CD4-positive, alpha-beta T cell (primary cell): ENCODE measurements at regions of chr1 and their contacts with region 1.

Region 1: GRCh38 chr1:232923739-232924386 is 26.5 kb upstream of the NTPCR start:
- DNase-seq: peak; percentile 4 to 88 (median 21)
- ATAC-seq: peak; percentile 90
- H3K4me3 ChIP-seq: peak overlapping the region; percentile 17
- H3K4me3 Mint-ChIP-seq: peak overlapping the region; percentile 56
- H3K27ac ChIP-seq: peak overlapping the region; percentile 26 to 60
- H3K27ac Mint-ChIP-seq: peak overlapping the region; percentile 83
- H3K4me1 ChIP-seq: peaks cover 50% of the 10 kb centered on the region
- H3K4me1 Mint-ChIP-seq: peaks cover 64% of the 10 kb centered on the region
- H3K27me3 ChIP-seq: no peaks in the 10 kb centered on the region
- H3K27me3 Mint-ChIP-seq: no peaks in the 10 kb centered on the region
- CTCF ChIP-seq: no peak

Region 2: DNA sequence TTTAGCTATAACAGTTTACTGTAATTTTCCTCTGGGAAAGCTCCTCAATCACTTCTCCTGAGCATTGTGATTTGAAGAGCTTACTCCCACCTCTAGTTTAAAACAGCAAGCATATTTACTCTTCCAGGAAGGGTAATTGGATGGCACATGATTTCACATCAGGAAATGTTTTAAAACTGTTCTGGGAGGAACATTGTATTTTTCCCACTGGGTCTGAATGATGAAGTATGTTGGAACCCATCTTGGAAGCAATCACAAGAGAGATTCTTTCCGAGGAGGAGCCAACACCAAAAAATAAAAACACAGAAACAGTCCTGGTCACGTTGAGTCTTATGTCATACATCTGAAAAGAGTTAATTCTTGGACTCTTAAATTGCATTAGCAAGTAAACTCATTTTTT is 101.3 kb before region 1 on chr1:
- CTCF ChIA-PET with region 1: no interaction called
- POLR2A ChIA-PET with region 1: no interaction called
- intact Hi-C with region 1: no loop called
- DNase-seq: no peak
- ATAC-seq: no peak
- H3K4me3 ChIP-seq: no peak overlapping the region
- H3K4me3 Mint-ChIP-seq: no peak overlapping the region
- H3K27ac ChIP-seq: no peak overlapping the region
- H3K27ac Mint-ChIP-seq: no peak overlapping the region
- H3K4me1 ChIP-seq: no peaks in the 10 kb centered on the region
- H3K4me1 Mint-ChIP-seq: no peaks in the 10 kb centered on the region
- H3K27me3 ChIP-seq: no peaks in the 10 kb centered on the region
- H3K27me3 Mint-ChIP-seq: no peaks in the 10 kb centered on the region
- CTCF ChIP-seq: no peak

Region 3: GRCh38 chr1:232943679-232944252 is 19.9 kb after region 1 on chr1:
- CTCF ChIA-PET with region 1: no interaction called
- POLR2A ChIA-PET with region 1: interaction called, 11 read pairs
- intact Hi-C with region 1: loop called in 1 of 2 experiments (anchors 2 kb)
- DNase-seq: no peak
- ATAC-seq: no peak
- H3K4me3 ChIP-seq: no peak overlapping the region
- H3K4me3 Mint-ChIP-seq: peak overlapping the region; percentile 26
- H3K27ac ChIP-seq: no peak overlapping the region
- H3K27ac Mint-ChIP-seq: peak overlapping the region; percentile 60
- H3K4me1 ChIP-seq: peaks cover 14% of the 10 kb centered on the region
- H3K4me1 Mint-ChIP-seq: peaks cover 25% of the 10 kb centered on the region
- H3K27me3 ChIP-seq: no peaks in the 10 kb centered on the region
- H3K27me3 Mint-ChIP-seq: no peaks in the 10 kb centered on the region
- CTCF ChIP-seq: no peak

Region 4: DNA sequence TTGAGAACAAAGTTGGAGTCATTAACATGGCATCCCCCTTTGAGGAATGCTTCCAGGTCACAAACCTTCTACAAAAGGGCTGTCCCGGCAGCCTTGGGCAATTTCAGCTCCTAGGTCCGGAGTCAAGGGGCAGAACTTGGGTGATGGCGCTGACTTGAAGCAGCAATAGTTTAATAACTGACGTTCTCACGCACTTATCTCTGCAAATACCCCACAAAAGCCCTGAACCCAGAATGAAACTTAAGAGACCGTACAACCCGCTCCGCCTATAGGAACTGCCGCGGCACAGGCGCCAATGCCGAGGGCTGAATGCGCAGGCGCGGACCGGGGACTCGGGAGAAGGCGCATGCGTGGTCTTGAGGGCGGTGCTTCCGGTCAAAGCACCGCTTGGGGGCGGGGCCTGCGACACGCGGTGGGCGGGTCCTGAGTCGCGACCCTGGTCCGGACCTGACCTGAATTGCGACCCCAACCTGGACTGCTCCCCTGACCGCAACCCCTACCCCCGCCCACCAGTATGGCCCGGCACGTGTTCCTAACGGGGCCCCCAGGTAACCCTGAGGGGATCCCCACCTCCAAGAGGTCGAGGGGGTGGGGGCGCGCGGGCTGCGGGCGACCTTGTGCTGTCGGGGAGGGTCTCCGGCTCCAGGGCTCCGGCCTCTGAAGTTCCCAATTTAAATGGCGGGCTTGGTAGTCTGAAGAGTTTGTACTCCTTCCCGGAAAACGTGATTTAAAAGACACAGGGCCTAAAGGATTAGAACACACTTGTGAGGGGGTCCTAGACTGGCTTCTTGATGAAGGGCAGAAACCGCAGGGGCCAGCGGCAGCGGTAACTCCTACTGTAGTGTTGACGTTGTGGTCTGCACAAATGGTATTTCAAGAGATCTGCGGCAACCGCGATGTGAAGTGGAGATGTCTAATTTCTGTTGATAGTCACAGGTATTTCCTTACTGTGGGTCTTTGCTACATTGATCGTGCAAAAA is 26.6 kb after region 1 on chr1 and contains the start of gene NTPCR:
- CTCF ChIA-PET with region 1: no interaction called
- POLR2A ChIA-PET with region 1: interaction called, 7 read pairs
- intact Hi-C with region 1: loop called (anchors 1 to 2 kb)
- DNase-seq: peak; percentile 86 to 98 (median 94)
- ATAC-seq: peak; percentile 83
- H3K4me3 ChIP-seq: peak within 1 kb of the TSS; percentile 85
- H3K4me3 Mint-ChIP-seq: peak within 1 kb of the TSS; percentile 96
- H3K27ac ChIP-seq: peak within 1 kb of the TSS; percentile 56 to 66
- H3K27ac Mint-ChIP-seq: peak within 1 kb of the TSS; percentile 83
- H3K4me1 ChIP-seq: peaks cover 27% of the 10 kb centered on the region
- H3K4me1 Mint-ChIP-seq: peaks cover 54% of the 10 kb centered on the region
- H3K27me3 ChIP-seq: no peaks in the 10 kb centered on the region
- H3K27me3 Mint-ChIP-seq: no peaks in the 10 kb centered on the region
- CTCF ChIP-seq: no peak
- total RNA-seq, gene NTPCR: 8.5 to 9.3 TPM

Region 5: DNA sequence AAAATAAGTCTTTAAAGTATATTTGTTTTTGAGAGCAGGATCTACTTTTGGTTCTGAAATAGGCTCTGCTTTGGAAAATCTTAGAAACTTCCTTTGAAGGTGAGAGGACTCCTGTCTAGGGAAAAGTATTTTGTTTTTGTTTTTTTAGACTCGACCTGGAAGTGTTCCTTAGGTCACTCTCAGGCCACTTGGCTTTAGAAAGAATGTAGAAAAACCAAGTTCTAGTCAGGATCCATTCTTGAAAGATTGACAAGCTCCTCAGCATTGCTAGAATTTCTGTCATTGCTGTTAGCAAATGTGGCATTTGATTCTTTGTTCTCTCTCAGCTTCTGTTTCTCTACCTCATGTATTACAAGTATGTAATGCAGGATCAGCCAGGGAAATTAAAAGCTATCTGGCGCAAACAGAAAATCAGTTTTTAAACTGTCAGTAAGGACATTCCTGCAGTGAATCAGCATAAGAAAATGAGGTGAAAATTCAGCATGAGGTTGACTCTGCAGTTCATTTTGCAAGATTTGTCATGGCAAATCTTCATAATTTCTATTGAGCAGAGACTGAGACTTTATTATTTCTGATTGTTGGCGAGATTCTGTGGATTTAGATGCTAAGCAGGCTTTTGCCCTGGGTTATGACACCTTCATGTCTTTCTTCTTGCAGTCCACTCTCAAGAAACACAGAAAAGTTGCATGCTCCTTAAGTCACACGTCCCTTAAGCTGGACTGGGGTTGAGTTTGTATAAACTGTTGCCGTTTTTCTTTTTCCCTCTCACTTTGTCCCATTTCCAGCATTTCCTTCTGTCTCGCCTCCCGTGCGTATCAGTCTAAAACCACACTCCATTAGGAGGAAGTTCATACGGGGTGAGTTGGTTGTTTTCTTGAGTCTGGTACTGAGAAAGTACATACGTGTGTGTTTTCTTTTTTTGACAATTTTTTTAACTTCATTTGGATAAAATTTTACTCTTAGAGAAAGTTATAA is 39.2 kb after region 1 on chr1:
- CTCF ChIA-PET with region 1: no interaction called
- POLR2A ChIA-PET with region 1: interaction called, 4 read pairs
- intact Hi-C with region 1: loop called in 1 of 2 experiments (anchors 5 kb)
- DNase-seq: no peak
- ATAC-seq: peak; percentile 52
- H3K4me3 ChIP-seq: no peak overlapping the region
- H3K4me3 Mint-ChIP-seq: peak overlapping the region; percentile 54
- H3K27ac ChIP-seq: no peak overlapping the region
- H3K27ac Mint-ChIP-seq: peak overlapping the region; percentile 68
- H3K4me1 ChIP-seq: peaks cover 4% of the 10 kb centered on the region
- H3K4me1 Mint-ChIP-seq: peaks cover 41% of the 10 kb centered on the region
- H3K27me3 ChIP-seq: no peaks in the 10 kb centered on the region
- H3K27me3 Mint-ChIP-seq: no peaks in the 10 kb centered on the region
- CTCF ChIP-seq: no peak